ENCODE measurements at regions of chr12 and their contacts with region 1.

Region 1: GRCh38 chr12:116818948-116819832 is 62.1 kb downstream of the HRK start:
- DNase-seq: peak; percentile 82 to 96 (median 91)
- ATAC-seq: peak; percentile 88
- H3K4me3 ChIP-seq: peak overlapping the region; percentile 70 to 93
- H3K4me3 Mint-ChIP-seq: peak overlapping the region; percentile 89
- H3K27ac ChIP-seq: peak overlapping the region; percentile 83 to 95
- H3K27ac Mint-ChIP-seq: peak overlapping the region; percentile 96
- H3K4me1 ChIP-seq: peaks cover 18% of the 10 kb centered on the region
- H3K4me1 Mint-ChIP-seq: peaks cover 21% of the 10 kb centered on the region
- H3K27me3 ChIP-seq: peaks cover 0 to 2% of the 10 kb centered on the region in 2 experiments
- H3K27me3 Mint-ChIP-seq: peaks cover 2% of the 10 kb centered on the region
- CTCF ChIP-seq: no peak

Region 2: DNA sequence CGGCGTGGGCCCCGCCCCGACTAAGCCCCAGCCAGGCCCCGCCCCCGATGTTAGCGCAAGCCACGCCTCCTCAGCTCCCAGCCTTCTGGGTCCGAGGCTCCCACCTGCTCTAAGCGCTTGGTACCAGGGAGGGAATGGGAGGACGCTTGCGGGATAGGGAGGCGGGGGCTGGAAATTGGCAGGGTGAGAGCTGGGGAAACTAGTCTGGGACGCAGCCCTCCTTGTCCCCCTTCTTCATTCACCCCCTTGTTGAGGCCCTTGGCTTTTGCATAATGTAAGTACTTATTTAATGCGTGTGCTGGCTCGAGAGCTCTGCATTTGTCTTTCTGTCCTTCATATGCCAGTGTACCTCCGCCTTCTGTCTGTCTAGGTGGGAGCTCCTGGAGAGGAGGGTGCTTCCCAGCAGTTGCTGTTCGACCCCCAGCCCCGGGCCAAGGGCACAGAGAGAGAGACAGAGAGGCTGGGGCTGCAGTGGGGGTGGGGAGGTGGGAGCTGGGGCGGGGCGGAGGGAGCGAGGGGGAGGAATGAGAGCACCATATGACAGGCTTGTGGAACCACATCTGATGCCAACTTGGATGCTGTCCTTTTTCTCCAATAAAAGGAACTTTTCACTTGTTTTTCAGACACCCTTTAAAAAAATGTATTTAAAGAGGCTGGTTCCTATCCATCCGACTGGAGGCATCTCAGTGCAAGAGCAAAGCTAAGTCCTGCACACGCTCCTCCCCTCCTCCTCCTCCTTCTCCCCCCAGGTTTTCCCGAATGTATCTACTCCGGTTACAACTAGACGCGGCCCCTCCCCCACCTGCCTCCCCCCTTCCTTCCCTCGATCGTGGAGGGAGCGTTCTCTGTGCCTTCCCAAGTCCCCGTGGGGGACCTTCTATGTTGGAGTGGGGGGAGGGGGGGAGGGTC is 285.6 kb before region 1 on chr12:
- CTCF ChIA-PET with region 1: no interaction called
- POLR2A ChIA-PET with region 1: no interaction called
- intact Hi-C with region 1: loop called (anchors 5 to 10 kb)
- DNase-seq: peak; percentile 54 to 85 (median 77)
- ATAC-seq: peak; percentile 96
- H3K4me3 ChIP-seq: peak overlapping the region; percentile 59 to 70
- H3K4me3 Mint-ChIP-seq: peak overlapping the region; percentile 92
- H3K27ac ChIP-seq: no peak overlapping the region
- H3K27ac Mint-ChIP-seq: no peak overlapping the region
- H3K4me1 ChIP-seq: peaks cover 12% of the 10 kb centered on the region
- H3K4me1 Mint-ChIP-seq: peaks cover 18% of the 10 kb centered on the region
- H3K27me3 ChIP-seq: no peaks in the 10 kb centered on the region
- H3K27me3 Mint-ChIP-seq: no peaks in the 10 kb centered on the region
- CTCF ChIP-seq: no peak

Region 3: GRCh38 chr12:116910645-116911451 is 91.7 kb after region 1 on chr12 and contains the start of gene FBXW8:
- CTCF ChIA-PET with region 1: no interaction called
- POLR2A ChIA-PET with region 1: no interaction called
- intact Hi-C with region 1: loop called in 1 of 2 experiments (anchors 2 kb)
- DNase-seq: peak; percentile 17 to 79 (median 64)
- ATAC-seq: peak; percentile 75
- H3K4me3 ChIP-seq: peak within 1 kb of the TSS; percentile 52
- H3K4me3 Mint-ChIP-seq: peak within 1 kb of the TSS; percentile 87
- H3K27ac ChIP-seq: peak within 1 kb of the TSS in 1 of 2 experiments; percentile 43
- H3K27ac Mint-ChIP-seq: peak within 1 kb of the TSS; percentile 76
- H3K4me1 ChIP-seq: peaks cover 9% of the 10 kb centered on the region
- H3K4me1 Mint-ChIP-seq: peaks cover 35% of the 10 kb centered on the region
- H3K27me3 ChIP-seq: no peaks in the 10 kb centered on the region
- H3K27me3 Mint-ChIP-seq: peaks cover 2% of the 10 kb centered on the region
- CTCF ChIP-seq: no peak
- total RNA-seq, gene FBXW8: 5.6 to 6.5 TPM

Region 4: DNA sequence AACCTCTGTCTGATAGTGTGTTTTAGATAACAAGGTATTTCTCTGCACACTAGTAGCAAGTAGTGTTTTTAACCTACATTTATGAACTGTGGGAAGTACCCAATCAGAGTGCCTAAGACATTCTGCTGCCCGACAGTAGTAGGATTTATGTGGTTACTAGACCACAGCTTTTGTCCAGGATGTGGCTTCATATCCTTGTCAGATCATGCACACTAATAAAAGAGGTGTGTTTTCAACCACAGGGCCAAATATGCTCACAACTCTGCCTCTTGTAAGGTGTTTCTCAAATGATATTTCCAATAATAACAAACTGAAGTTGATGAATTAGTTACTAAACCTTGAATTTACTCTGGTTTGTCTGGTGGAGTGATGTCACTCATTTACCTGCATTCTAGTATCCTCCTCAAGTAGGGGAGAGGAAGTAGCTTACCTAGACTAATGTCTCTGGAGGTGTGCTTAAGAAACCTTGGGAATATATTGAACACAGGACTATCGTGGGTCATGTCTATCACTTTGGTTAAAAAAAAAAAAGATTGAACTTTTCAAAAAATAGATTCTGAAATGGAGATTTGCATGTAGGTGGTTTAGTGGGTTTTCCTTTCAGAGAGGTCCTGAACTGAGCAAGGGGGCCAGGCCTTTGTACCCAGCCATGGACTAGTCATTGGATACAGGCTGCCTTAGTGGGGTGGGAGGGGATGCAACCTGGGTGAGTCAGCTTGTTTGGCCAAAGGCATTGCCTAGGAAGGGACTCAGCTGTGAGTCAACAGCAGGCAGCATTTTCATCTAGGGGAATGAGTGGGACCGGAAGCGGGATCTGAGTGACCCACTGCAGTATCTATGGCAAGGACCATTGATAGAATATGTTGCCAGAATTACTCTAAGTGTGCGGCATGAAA is 105.6 kb after region 1 on chr12:
- CTCF ChIA-PET with region 1: no interaction called
- POLR2A ChIA-PET with region 1: no interaction called
- intact Hi-C with region 1: loop called in 1 of 2 experiments (anchors 5 kb)
- DNase-seq: peak; percentile 4 to 90 (median 46)
- ATAC-seq: peak; percentile 87
- H3K4me3 ChIP-seq: peak overlapping the region; percentile 7 to 13
- H3K4me3 Mint-ChIP-seq: peak overlapping the region; percentile 68
- H3K27ac ChIP-seq: no peak overlapping the region
- H3K27ac Mint-ChIP-seq: peak overlapping the region; percentile 56
- H3K4me1 ChIP-seq: peaks cover 66% of the 10 kb centered on the region
- H3K4me1 Mint-ChIP-seq: peaks cover 80% of the 10 kb centered on the region
- H3K27me3 ChIP-seq: no peaks in the 10 kb centered on the region
- H3K27me3 Mint-ChIP-seq: no peaks in the 10 kb centered on the region
- CTCF ChIP-seq: no peak

Region 5: GRCh38 chr12:117190210-117190781 is 371.1 kb after region 1 on chr12 and contains the start of gene FBXO21:
- CTCF ChIA-PET with region 1: no interaction called
- POLR2A ChIA-PET with region 1: no interaction called
- intact Hi-C with region 1: loop called (anchors 1 to 2 kb)
- DNase-seq: peak; percentile 90 to 98 (median 93)
- ATAC-seq: peak; percentile 96
- H3K4me3 ChIP-seq: peak within 1 kb of the TSS; percentile 49 to 87
- H3K4me3 Mint-ChIP-seq: peak within 1 kb of the TSS; percentile 93
- H3K27ac ChIP-seq: peak within 1 kb of the TSS; percentile 69 to 83
- H3K27ac Mint-ChIP-seq: peak within 1 kb of the TSS; percentile 92
- H3K4me1 ChIP-seq: peaks cover 22% of the 10 kb centered on the region
- H3K4me1 Mint-ChIP-seq: peaks cover 31% of the 10 kb centered on the region
- H3K27me3 ChIP-seq: no peaks in the 10 kb centered on the region
- H3K27me3 Mint-ChIP-seq: no peaks in the 10 kb centered on the region
- CTCF ChIP-seq: no peak
- total RNA-seq, gene FBXO21: 77.7 to 87.7 TPM

Region 6: DNA sequence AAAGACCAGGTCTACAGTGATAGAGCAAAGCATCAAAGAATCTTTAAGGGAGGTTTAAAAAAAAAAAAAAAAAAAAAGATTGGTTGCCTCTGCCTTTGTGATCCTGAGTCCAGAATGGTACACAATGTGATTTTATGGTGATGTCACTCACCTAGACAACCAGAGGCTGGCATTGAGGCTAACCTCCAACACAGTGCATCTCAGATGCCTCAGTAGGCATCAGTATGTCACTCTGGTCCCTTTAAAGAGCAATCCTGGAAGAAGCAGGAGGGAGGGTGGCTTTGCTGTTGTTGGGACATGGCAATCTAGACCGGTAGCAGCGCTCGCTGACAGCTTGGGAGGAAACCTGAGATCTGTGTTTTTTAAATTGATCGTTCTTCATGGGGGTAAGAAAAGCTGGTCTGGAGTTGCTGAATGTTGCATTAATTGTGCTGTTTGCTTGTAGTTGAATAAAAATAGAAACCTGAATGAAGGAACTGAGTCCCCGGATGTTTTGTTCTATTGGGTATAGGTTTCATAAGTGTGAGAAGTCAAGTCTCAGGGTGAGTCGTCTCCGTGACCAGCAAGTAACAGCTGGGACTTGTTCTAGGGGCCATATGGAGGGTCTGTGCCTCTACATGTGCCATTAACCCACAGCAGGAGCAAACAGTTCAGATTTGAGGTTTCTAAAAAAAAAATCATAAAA is 1326.1 kb after region 1 on chr12:
- CTCF ChIA-PET with region 1: no interaction called
- POLR2A ChIA-PET with region 1: no interaction called
- intact Hi-C with region 1: loop called in 1 of 2 experiments (anchors 10 kb)
- DNase-seq: no peak
- ATAC-seq: no peak
- H3K4me3 ChIP-seq: no peak overlapping the region
- H3K4me3 Mint-ChIP-seq: no peak overlapping the region
- H3K27ac ChIP-seq: no peak overlapping the region
- H3K27ac Mint-ChIP-seq: peak overlapping the region; percentile 25
- H3K4me1 ChIP-seq: no peaks in the 10 kb centered on the region
- H3K4me1 Mint-ChIP-seq: peaks cover 7% of the 10 kb centered on the region
- H3K27me3 ChIP-seq: no peaks in the 10 kb centered on the region
- H3K27me3 Mint-ChIP-seq: no peaks in the 10 kb centered on the region
- CTCF ChIP-seq: no peak